H1 (cell line): ENCODE measurements at regions of chr18 and their contacts with region 1.

Region 1: GRCh38 chr18:26526128-26526965 is 22.0 kb downstream of the KCTD1 start:
- DNase-seq: peak in 1 of 2 experiments; percentile 50
- H3K4me3 ChIP-seq: peak overlapping the region in 2 of 4 experiments; percentile 15 to 31; a peak in 3 of 8 replicates
- H3K27ac ChIP-seq: no peak overlapping the region; the same call in 1 of the 2 replicates
- H3K4me1 ChIP-seq: peaks cover 16 to 28% (median 21%) of the 10 kb centered on the region in 4 experiments
- H3K27me3 ChIP-seq: no peaks in the 10 kb centered on the region
- CTCF ChIP-seq: no peak
- EP300 ChIP-seq: no peak
- POLR2A ChIP-seq: no peak
- RAD21 ChIP-seq: no peak

Region 2: GRCh38 chr18:26548429-26549262 is 22.3 kb after region 1 on chr18 and contains the start of gene KCTD1:
- CTCF ChIA-PET with region 1: interaction called, 7 read pairs
- POLR2A ChIA-PET with region 1: interaction called, 16 read pairs
- DNase-seq: peak in 1 of 2 experiments; percentile 86
- H3K4me3 ChIP-seq: peak within 1 kb of the TSS; percentile 41 to 80 (median 61)
- H3K27ac ChIP-seq: no peak within 1 kb of the TSS
- H3K4me1 ChIP-seq: peaks cover 3 to 16% (median 6%) of the 10 kb centered on the region in 4 experiments; a peak in 6 of 7 replicates
- H3K27me3 ChIP-seq: peaks cover 26 to 69% (median 53%) of the 10 kb centered on the region in 4 experiments
- CTCF ChIP-seq: no peak
- EP300 ChIP-seq: no peak
- POLR2A ChIP-seq: no peak
- RAD21 ChIP-seq: no peak
- total RNA-seq, gene KCTD1: 14.0 and 17.6 TPM in 2 replicates